ENCODE measurements at regions of chr18 and their contacts with region 1.

Region 1: DNA sequence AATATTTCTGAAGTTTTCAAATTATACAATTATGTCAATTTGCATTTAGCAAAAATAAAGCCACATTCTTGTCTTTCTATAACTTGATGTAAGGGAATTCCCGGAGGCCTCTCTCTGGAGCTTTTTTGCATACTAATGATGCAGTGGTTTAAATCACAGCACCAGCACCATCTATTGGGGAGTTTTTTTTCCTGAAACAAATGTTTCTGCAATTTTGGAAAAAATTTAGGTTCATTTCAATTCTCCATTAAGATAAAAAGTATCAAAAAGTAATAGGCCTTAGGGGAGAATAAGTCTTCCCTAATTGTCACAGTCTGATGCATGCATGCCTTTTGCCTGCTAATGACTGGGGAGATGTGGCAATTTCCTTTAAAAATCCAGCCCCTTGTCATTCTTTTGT is 13.5 kb downstream of the CBLN2 start:
- DNase-seq: no peak
- ATAC-seq: no peak
- H3K4me3 ChIP-seq: no peak overlapping the region
- H3K4me3 Mint-ChIP-seq: no peak overlapping the region
- H3K27ac ChIP-seq: no peak overlapping the region
- H3K27ac Mint-ChIP-seq: no peak overlapping the region
- H3K4me1 ChIP-seq: no peaks in the 10 kb centered on the region
- H3K4me1 Mint-ChIP-seq: no peaks in the 10 kb centered on the region
- H3K27me3 ChIP-seq: no peaks in the 10 kb centered on the region
- H3K27me3 Mint-ChIP-seq: no peaks in the 10 kb centered on the region
- CTCF ChIP-seq: no peak

Region 2: GRCh38 chr18:72504866-72505265 is 25.8 kb before region 1 on chr18:
- CTCF ChIA-PET with region 1: no interaction called
- POLR2A ChIA-PET with region 1: no interaction called
- intact Hi-C with region 1: no loop called
- DNase-seq: no peak
- ATAC-seq: no peak
- H3K4me3 ChIP-seq: no peak overlapping the region
- H3K4me3 Mint-ChIP-seq: no peak overlapping the region
- H3K27ac ChIP-seq: no peak overlapping the region
- H3K27ac Mint-ChIP-seq: no peak overlapping the region
- H3K4me1 ChIP-seq: no peaks in the 10 kb centered on the region
- H3K4me1 Mint-ChIP-seq: no peaks in the 10 kb centered on the region
- H3K27me3 ChIP-seq: no peaks in the 10 kb centered on the region
- H3K27me3 Mint-ChIP-seq: no peaks in the 10 kb centered on the region
- CTCF ChIP-seq: no peak

Region 3: GRCh38 chr18:72588360-72588759 is 57.7 kb after region 1 on chr18:
- CTCF ChIA-PET with region 1: no interaction called
- POLR2A ChIA-PET with region 1: no interaction called
- intact Hi-C with region 1: loop called (anchors 10 kb)
- DNase-seq: no peak
- ATAC-seq: no peak
- H3K4me3 ChIP-seq: no peak overlapping the region
- H3K4me3 Mint-ChIP-seq: no peak overlapping the region
- H3K27ac ChIP-seq: no peak overlapping the region
- H3K27ac Mint-ChIP-seq: no peak overlapping the region
- H3K4me1 ChIP-seq: no peaks in the 10 kb centered on the region
- H3K4me1 Mint-ChIP-seq: no peaks in the 10 kb centered on the region
- H3K27me3 ChIP-seq: no peaks in the 10 kb centered on the region
- H3K27me3 Mint-ChIP-seq: no peaks in the 10 kb centered on the region
- CTCF ChIP-seq: no peak

Region 4: GRCh38 chr18:72819050-72819449 is 288.4 kb after region 1 on chr18:
- CTCF ChIA-PET with region 1: no interaction called
- POLR2A ChIA-PET with region 1: no interaction called
- intact Hi-C with region 1: no loop called
- DNase-seq: no peak
- ATAC-seq: no peak
- H3K4me3 ChIP-seq: no peak overlapping the region
- H3K4me3 Mint-ChIP-seq: no peak overlapping the region
- H3K27ac ChIP-seq: no peak overlapping the region
- H3K27ac Mint-ChIP-seq: no peak overlapping the region
- H3K4me1 ChIP-seq: no peaks in the 10 kb centered on the region
- H3K4me1 Mint-ChIP-seq: no peaks in the 10 kb centered on the region
- H3K27me3 ChIP-seq: no peaks in the 10 kb centered on the region
- H3K27me3 Mint-ChIP-seq: no peaks in the 10 kb centered on the region
- CTCF ChIP-seq: no peak

Region 5: GRCh38 chr18:72878143-72878542 is 347.5 kb after region 1 on chr18:
- CTCF ChIA-PET with region 1: no interaction called
- POLR2A ChIA-PET with region 1: no interaction called
- intact Hi-C with region 1: no loop called
- DNase-seq: no peak
- ATAC-seq: no peak
- H3K4me3 ChIP-seq: no peak overlapping the region
- H3K4me3 Mint-ChIP-seq: no peak overlapping the region
- H3K27ac ChIP-seq: no peak overlapping the region
- H3K27ac Mint-ChIP-seq: no peak overlapping the region
- H3K4me1 ChIP-seq: no peaks in the 10 kb centered on the region
- H3K4me1 Mint-ChIP-seq: no peaks in the 10 kb centered on the region
- H3K27me3 ChIP-seq: no peaks in the 10 kb centered on the region
- H3K27me3 Mint-ChIP-seq: no peaks in the 10 kb centered on the region
- CTCF ChIP-seq: no peak

Region 6: DNA sequence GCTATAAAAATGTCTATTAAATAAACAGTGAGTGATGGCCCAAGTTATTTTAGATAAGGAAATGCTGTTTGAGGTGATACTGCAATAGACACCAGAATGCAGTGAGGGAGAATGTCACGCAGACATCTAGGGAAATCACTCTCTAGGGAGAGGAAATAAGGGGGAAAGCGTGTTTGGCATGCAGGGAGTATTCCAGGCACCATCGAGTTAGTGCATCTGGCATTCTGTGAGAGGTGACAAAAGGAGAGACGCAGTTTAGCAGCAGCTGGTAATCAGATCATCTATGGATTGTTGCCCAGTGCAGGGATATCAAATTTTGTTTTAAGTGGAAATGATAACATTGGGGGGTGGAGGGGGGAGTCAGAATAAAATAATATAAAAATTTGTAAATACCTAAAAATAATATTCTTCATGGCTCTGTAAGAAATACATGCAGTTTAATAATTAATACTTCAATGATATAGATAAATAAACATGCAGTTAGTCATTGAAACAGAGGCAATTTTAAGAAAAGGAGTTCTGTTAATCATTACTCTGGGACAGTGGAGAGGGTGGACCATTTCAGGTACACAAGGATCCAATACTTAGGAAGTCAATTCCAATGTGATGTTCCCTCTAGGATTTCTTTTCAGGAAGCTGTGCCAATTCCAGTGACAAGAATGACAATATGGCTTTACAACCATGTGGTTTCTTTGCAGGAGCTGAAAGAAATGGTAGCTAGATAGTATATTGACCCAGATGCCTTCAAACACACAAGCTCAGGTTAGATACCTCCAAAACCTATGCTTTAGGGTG is 512.8 kb after region 1 on chr18:
- CTCF ChIA-PET with region 1: no interaction called
- POLR2A ChIA-PET with region 1: no interaction called
- intact Hi-C with region 1: no loop called
- DNase-seq: no peak
- ATAC-seq: no peak
- H3K4me3 ChIP-seq: no peak overlapping the region
- H3K4me3 Mint-ChIP-seq: no peak overlapping the region
- H3K27ac ChIP-seq: no peak overlapping the region
- H3K27ac Mint-ChIP-seq: no peak overlapping the region
- H3K4me1 ChIP-seq: peaks cover 7 to 18% of the 10 kb centered on the region in 2 donors
- H3K4me1 Mint-ChIP-seq: peaks cover 26% of the 10 kb centered on the region
- H3K27me3 ChIP-seq: no peaks in the 10 kb centered on the region
- H3K27me3 Mint-ChIP-seq: no peaks in the 10 kb centered on the region
- CTCF ChIP-seq: no peak